HepG2 (cell line): ENCODE measurements at regions of chr1 and their contacts with region 1.

Region 1: DNA sequence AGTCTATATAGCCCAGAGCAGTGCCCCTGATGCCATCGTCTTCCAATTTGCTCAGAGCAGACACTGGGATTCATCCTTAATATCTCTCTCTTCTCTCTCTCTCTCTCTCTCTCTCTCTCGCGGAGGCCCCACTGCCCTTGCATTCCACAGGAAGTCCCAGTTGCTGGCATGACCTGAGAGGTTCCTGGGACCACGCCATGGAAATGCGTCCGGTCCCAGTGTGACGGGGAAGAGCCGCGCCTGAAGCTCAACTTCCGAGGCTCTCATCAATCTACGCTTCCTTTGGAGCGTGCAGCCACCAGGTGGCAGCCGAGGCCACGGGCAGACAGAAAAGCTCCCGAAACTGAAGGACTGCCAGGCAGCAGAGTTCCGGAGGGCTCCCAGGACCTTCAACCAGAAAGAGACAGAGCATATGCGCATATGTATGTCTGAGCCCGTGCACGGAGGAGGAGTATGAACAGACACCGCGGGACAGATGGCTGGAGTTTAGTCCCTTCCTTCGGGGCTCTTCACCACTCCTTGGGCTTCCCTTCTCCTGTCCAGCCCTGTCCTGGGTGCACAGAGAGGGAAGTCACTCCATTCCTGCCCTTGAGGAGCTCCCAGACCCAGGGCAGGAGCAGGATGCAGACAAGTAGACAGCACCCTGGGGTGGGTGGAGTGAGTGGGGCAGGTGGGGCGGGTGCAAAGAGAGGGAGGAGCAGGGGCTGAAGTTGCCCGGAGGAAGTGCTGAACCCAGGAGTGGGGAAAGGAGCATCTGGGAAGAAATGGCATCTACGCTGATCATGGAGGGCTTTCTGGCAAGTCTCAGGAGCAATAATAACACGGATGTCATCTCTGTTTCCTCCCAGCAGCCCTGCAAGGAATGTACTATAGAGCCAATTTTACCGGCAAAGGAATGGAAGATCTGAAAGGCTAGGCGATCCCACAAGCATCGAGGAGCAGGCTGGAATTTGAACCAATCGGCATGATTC is 10.5 kb downstream of the PDZK1IP1 start:
- DNase-seq: peak; percentile 89
- ATAC-seq: peak; percentile 68
- H3K4me3 ChIP-seq: peak overlapping the region; percentile 53 to 76 (median 65)
- H3K27ac ChIP-seq: peak overlapping the region; percentile 16
- H3K4me1 ChIP-seq: peaks cover 79% of the 10 kb centered on the region
- H3K27me3 ChIP-seq: no peaks in the 10 kb centered on the region; a peak in 1 of 5 replicates
- CTCF ChIP-seq: peak; percentile 99
- EP300 ChIP-seq: no peak
- POLR2A ChIP-seq: no peak
- RAD21 ChIP-seq: peak; percentile 97

Region 2: GRCh38 chr1:47262787-47263413 is 83.6 kb after region 1 on chr1:
- CTCF ChIA-PET with region 1: interaction called, 46 read pairs
- POLR2A ChIA-PET with region 1: interaction called, 16 read pairs
- in situ Hi-C with region 1: no loop called
- intact Hi-C with region 1: loop called (anchors 1 kb)
- DNase-seq: peak; percentile 59
- ATAC-seq: peak; percentile 69
- H3K4me3 ChIP-seq: no peak overlapping the region
- H3K27ac ChIP-seq: no peak overlapping the region
- H3K4me1 ChIP-seq: no peaks in the 10 kb centered on the region
- H3K27me3 ChIP-seq: no peaks in the 10 kb centered on the region
- CTCF ChIP-seq: peak; percentile 78
- EP300 ChIP-seq: no peak
- POLR2A ChIP-seq: no peak
- RAD21 ChIP-seq: peak; percentile 75